GM10248 (cell line): ENCODE measurements at regions of chr18 and their contacts with region 1.

Region 1: DNA sequence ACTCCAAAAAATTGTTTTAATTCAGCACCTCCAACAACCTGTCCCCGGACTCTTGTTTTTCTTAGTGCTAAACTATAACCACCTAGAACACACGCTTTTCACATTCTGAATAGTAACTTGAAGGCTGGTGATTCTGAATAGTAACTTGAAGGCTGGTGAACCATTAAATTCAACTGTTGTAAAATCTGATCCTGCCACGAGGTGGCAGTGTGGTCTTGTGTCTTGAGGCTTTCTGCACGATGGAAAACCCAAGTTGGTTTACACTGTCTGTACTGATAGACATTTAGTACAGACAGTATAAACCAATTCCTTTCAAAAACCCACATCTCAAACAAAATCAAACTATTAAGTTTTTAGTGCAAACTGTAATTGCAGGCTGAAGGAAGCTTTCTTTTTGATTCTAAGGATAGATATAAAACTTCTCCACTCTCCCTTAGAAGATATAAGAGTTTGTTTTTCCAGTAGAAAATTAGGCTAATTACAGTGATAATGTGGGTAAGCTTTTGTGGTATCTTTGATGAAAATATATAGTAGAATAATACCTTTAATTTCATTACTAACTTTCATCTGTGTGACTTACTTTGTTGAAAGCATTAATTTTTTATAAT is 57.6 kb downstream of the VAPA start:
- DNase-seq: peak; percentile 76
- CTCF ChIP-seq: peak; percentile 81

Region 2: DNA sequence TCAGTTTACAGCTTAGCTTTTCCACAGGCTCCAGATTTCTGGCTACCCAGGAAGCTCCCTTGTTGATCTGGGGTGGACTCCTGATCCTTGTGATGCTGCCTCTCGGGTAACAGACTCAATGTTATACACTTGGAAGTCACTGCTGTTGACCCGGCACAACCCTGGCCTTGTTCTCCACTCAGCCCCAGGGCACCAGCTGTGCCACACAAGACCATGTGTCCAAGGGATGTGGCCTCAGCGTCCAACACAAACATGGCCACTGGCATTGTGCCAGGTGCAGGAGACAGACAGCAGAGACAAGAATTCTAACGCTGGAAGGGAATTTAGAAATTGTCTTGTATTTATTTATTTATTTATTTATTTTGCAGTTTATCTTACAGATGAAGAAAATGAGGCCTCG is 318.0 kb before region 1 on chr18:
- CTCF ChIA-PET with region 1: no interaction called
- POLR2A ChIA-PET with region 1: no interaction called
- DNase-seq: no peak
- CTCF ChIP-seq: no peak

Region 3: GRCh38 chr18:9951022-9951859 is 20.2 kb before region 1 on chr18:
- CTCF ChIA-PET with region 1: interaction called, 12 read pairs
- POLR2A ChIA-PET with region 1: no interaction called
- DNase-seq: peak; percentile 19
- CTCF ChIP-seq: peak; percentile 51

Region 4: DNA sequence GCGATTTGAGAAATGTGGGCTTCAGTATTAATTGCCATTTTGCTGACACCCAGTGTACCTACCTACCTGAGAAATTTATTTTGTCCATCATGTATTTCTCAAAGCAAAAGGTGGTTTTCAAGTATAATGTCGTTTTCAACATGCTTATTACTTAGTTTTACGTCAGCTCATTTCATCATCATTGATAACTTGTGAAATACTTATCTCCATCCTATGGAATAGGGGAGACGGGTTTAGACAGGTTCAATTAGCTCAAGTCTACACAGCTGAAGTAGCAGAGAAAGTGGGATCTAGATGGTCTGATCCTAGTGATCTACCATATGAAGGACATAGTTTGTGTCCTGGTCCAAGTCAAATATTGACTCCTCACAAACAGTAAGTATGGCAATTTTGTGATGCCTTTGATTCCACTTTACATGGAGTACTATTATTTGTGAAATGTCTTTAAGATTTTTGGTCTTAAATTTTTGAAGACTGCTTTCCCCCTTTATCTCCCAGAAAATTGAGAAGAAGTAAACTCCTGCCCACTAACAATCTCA is 12.5 kb before region 1 on chr18:
- CTCF ChIA-PET with region 1: interaction called, 13 read pairs
- POLR2A ChIA-PET with region 1: no interaction called
- DNase-seq: no peak
- CTCF ChIP-seq: no peak

Region 5: GRCh38 chr18:9982711-9983110 is 11.3 kb after region 1 on chr18:
- CTCF ChIA-PET with region 1: interaction called, 10 read pairs
- POLR2A ChIA-PET with region 1: no interaction called
- DNase-seq: no peak
- CTCF ChIP-seq: no peak

Region 6: DNA sequence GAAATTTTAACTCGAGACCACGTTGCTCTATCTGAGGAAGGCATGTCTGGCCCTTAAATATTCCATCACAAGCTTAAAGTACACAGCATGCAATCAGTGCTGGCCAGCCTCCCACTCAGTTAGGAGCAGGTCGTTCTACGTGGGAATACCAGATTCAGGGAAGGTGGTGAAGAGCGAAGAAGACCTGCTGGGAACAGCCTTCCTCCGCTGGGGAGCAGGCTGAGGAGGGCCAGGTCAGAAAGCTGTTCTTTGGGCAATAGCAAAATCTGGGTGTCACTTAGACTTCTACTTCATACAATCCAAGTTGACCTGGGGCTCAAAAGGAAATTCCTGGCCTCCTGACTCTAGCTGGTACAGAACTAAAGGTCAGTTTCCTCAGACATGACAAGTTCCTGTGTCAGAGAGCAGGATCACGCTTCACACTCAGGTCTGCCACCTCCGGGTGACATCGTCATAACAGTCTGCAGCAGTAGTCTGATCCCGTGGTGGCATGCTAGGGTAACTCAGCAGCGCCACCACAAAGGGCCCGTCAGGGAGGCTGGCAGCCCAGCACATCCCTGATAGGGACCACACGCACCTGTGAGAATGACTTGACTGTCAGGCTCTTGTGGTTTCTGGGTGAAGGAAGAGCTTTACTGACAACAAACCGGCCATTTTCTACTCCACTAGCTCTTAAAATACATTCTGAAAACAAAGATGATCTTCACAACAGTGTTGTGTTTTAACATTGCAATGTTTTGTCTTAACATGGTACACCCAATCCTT is 519.2 kb after region 1 on chr18:
- CTCF ChIA-PET with region 1: interaction called, 12 read pairs
- POLR2A ChIA-PET with region 1: no interaction called
- DNase-seq: peak; percentile 70
- CTCF ChIP-seq: peak; percentile 41

Region 7: GRCh38 chr18:10519999-10520935 is 548.9 kb after region 1 on chr18:
- CTCF ChIA-PET with region 1: interaction called, 91 read pairs
- POLR2A ChIA-PET with region 1: no interaction called
- DNase-seq: peak; percentile 71
- CTCF ChIP-seq: peak; percentile 70